CD8-positive, alpha-beta T cell (primary cell): ENCODE measurements at regions of chr19 and their contacts with region 1.

Region 1: DNA sequence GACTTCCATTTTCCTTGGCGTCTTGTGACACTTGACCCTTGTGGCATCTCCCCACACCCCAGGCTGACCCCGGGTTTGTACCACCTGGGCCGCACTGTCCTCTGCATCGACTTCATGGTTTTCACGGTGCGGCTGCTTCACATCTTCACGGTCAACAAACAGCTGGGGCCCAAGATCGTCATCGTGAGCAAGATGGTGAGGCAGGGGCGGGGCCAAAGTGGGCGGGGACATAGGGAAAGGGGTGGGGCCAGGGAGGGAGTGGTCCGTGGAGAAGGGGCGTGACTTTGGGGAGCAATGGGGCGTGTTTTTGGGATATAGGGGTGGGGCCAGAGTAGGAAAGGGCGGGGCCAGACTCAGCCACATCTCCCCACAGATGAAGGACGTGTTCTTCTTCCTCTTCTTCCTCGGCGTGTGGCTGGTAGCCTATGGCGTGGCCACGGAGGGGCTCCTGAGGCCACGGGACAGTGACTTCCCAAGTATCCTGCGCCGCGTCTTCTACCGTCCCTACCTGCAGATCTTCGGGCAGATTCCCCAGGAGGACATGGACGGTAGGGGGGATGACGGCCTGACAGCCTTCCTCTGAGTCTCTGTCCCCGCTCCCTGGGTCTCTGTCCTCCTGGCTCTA is 42.8 kb downstream of the TRPM4 start:
- DNase-seq: peak in 2 of 9 experiments; percentile 28 to 32
- ATAC-seq: no peak
- H3K4me3 ChIP-seq: no peak overlapping the region
- H3K4me3 Mint-ChIP-seq: no peak overlapping the region
- H3K27ac ChIP-seq: no peak overlapping the region
- H3K27ac Mint-ChIP-seq: no peak overlapping the region
- H3K4me1 ChIP-seq: no peaks in the 10 kb centered on the region
- H3K4me1 Mint-ChIP-seq: peaks cover 2% of the 10 kb centered on the region
- H3K27me3 ChIP-seq: no peaks in the 10 kb centered on the region
- H3K27me3 Mint-ChIP-seq: peaks cover 11% of the 10 kb centered on the region
- CTCF ChIP-seq: no peak

Region 2: DNA sequence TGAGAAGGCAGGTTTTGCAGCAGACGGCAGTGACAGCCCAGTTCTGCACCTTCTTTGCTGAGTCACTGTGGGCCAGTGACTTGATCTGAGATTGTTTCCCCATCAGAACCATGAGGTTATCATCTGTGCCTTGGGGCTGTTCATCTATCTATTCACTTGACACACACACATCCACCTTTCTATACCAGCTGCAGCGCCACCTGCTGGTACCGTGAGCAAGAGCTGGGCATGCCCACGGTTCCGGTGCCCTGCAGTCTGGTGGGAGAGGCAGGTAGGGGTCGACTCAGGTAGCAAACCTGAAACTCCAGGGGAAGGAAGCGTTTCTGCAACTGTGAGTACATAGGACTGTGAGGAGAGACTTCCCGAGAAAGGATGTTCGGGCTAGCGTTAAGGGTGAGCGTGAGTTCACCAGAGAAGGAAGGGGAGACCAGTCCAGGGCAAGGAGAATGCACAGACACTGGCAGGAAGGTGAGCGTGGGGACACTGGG is 93.7 kb before region 1 on chr19:
- CTCF ChIA-PET with region 1: no interaction called
- POLR2A ChIA-PET with region 1: no interaction called
- intact Hi-C with region 1: no loop called
- DNase-seq: peak; percentile 42 to 78 (median 70)
- ATAC-seq: peak; percentile 83
- H3K4me3 ChIP-seq: no peak overlapping the region
- H3K4me3 Mint-ChIP-seq: no peak overlapping the region
- H3K27ac ChIP-seq: no peak overlapping the region
- H3K27ac Mint-ChIP-seq: no peak overlapping the region
- H3K4me1 ChIP-seq: no peaks in the 10 kb centered on the region
- H3K4me1 Mint-ChIP-seq: peaks cover 5% of the 10 kb centered on the region
- H3K27me3 ChIP-seq: no peaks in the 10 kb centered on the region
- H3K27me3 Mint-ChIP-seq: no peaks in the 10 kb centered on the region
- CTCF ChIP-seq: peak; percentile 80

Region 3: GRCh38 chr19:49186108-49186507 is 14.2 kb before region 1 on chr19:
- CTCF ChIA-PET with region 1: interaction called, 23 read pairs
- POLR2A ChIA-PET with region 1: no interaction called
- intact Hi-C with region 1: no loop called
- DNase-seq: no peak
- ATAC-seq: no peak
- H3K4me3 ChIP-seq: no peak overlapping the region
- H3K4me3 Mint-ChIP-seq: no peak overlapping the region
- H3K27ac ChIP-seq: no peak overlapping the region
- H3K27ac Mint-ChIP-seq: no peak overlapping the region
- H3K4me1 ChIP-seq: peaks cover 9% of the 10 kb centered on the region
- H3K4me1 Mint-ChIP-seq: peaks cover 6% of the 10 kb centered on the region
- H3K27me3 ChIP-seq: no peaks in the 10 kb centered on the region
- H3K27me3 Mint-ChIP-seq: peaks cover 4% of the 10 kb centered on the region
- CTCF ChIP-seq: no peak